Dorsolateral prefrontal cortex (tissue), 120 donors: ENCODE measurements at regions of chr6 and their contacts with region 1.

Region 1: DNA sequence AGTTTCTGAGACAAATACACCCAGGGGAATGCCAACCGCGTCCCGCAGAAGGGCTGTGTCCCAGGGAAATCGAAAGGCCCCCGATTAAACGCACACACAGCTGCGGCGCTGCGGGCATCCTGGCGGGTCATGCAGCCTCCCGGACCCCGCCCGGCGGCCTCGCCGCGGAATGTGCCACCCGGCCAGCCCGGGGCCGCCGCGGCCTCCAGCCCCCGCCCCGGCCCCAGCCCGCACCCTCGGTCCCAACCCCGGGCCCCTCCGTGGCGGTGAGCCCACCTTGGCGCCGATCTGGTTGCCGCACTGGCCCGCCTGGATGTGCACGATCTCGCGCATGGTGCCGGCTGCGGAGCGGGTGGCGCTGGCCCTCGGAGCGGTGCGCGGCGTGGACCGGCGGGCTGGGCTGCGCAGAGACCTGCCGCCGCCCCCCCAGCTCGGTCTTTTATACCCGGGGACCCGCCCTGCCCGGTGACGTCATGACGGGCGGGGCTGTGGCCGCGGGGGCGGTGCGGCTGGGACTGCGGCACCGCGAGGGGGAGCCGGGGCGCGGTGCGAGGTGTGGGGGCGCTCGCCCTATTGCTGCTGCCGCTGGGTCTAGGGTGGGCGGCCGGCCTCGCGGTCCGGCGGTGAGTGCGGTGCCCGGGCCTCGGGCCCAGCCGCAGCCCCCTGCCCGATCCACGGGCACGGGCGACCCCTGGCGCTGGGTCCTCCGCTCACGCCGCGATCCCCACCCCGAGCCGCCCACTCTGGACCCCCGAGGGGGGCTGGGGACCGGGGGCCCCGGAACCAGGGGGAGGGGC is at the start of gene TUBB2A:
- DNase-seq: peak; percentile 61 to 93 (median 83)
- H3K4me3 ChIP-seq: peak within 1 kb of the TSS; percentile 52 to 99 (median 84)
- H3K27ac ChIP-seq: peak within 1 kb of the TSS; percentile 52 to 99 (median 96)
- H3K27me3 ChIP-seq: no peaks in the 10 kb centered on the region
- CTCF ChIP-seq: peak in 54 of 56 donors; percentile 21 to 81 (median 60)
- total RNA-seq, gene TUBB2A: 207 to 859 (median 516) TPM

Region 2: DNA sequence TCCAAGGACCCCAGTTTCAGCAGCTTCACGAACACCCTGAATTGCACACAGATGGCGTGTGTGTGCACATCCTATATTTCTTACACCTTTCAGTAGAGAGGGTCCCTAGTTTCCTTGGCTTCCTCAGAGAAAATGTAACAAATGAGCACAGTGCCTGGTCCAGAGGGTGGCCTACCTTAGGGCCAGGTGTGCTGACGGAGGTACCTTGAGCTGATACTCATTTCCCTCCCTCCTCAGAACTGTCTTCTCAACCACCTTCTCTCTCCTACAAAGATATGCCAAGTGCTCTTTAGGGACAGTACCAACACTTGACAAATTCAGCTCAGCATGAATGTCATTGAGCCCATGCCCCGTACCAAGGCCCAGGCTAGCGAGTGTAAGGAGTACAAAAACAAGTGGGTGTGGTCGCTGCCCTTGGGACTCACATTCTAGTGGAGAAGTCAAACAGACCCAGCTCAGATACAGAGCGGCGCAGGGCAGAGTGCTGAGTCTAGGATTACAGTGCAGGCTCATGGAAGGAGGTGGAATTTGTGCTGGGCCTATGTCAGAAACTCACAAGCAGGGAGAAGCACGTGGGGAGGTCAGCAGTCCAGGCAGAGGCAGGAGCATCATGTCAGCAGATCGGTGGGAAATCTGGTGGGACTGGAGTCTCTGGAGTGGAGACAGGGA is 48.4 kb before region 1 on chr6:
- intact Hi-C with region 1: no loop called
- DNase-seq: no peak
- H3K4me3 ChIP-seq: no peak overlapping the region
- H3K27ac ChIP-seq: no peak overlapping the region
- H3K27me3 ChIP-seq: no peaks in the 10 kb centered on the region
- CTCF ChIP-seq: no peak

Region 3: DNA sequence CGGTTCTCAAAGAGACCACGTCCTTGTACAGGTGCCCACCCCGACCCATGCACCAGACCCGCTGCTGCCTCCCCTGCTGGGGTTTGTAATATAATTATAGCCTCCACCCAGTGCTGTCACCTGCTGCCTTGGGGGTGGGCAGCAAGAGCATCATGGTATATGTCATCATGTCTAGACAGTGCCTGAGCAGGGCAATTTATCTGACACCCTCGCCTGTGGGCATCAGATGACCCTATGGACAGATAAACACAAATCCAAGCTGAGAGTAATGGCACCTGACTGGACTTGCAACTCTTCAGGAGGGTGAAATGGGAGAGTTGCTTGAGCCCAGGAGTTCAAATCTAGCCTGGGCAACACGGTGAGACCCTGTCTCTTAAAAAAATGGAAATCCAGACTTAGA is 23.0 kb after region 1 on chr6:
- intact Hi-C with region 1: loop called in 1 of 2 experiments (anchors 1 kb)
- DNase-seq: no peak
- H3K4me3 ChIP-seq: no peak overlapping the region
- H3K27ac ChIP-seq: no peak overlapping the region
- H3K27me3 ChIP-seq: peaks cover 0 to 4% (median 0%) of the 10 kb centered on the region in 45 donors
- CTCF ChIP-seq: no peak

Region 4: GRCh38 chr6:3194535-3195419 is 37.4 kb after region 1 on chr6:
- intact Hi-C with region 1: loop called in 1 of 2 experiments (anchors 5 kb)
- DNase-seq: peak in 9 of 10 donors; percentile 63 to 86 (median 73)
- H3K4me3 ChIP-seq: peak overlapping the region in 52 of 59 donors; percentile 3 to 52 (median 30)
- H3K27ac ChIP-seq: peak overlapping the region; percentile 20 to 94 (median 85)
- H3K27me3 ChIP-seq: no peaks in the 10 kb centered on the region
- CTCF ChIP-seq: no peak

Region 5: GRCh38 chr6:3209114-3210023 is 52.0 kb after region 1 on chr6:
- intact Hi-C with region 1: loop called in 1 of 2 experiments (anchors 5 kb)
- DNase-seq: peak in 4 of 10 donors; percentile 54 to 58 (median 56)
- H3K4me3 ChIP-seq: peak overlapping the region in 1 of 59 donors; percentile 17
- H3K27ac ChIP-seq: peak overlapping the region in 3 of 59 donors; percentile 6 to 34 (median 16)
- H3K27me3 ChIP-seq: no peaks in the 10 kb centered on the region
- CTCF ChIP-seq: no peak

Region 6: GRCh38 chr6:3231247-3232016 is 74.1 kb after region 1 on chr6:
- intact Hi-C with region 1: loop called (anchors 5 kb)
- DNase-seq: peak; percentile 52 to 91 (median 83)
- H3K4me3 ChIP-seq: peak overlapping the region; percentile 53 to 94 (median 72)
- H3K27ac ChIP-seq: peak overlapping the region; percentile 71 to 99 (median 95)
- H3K27me3 ChIP-seq: peaks cover 0 to 75% (median 23%) of the 10 kb centered on the region in 45 donors
- CTCF ChIP-seq: peak in 5 of 56 donors; percentile 7 to 13 (median 9)

Region 7: GRCh38 chr6:3258720-3259490 is 101.6 kb after region 1 on chr6 and contains the start of gene PSMG4:
- intact Hi-C with region 1: loop called (anchors 2 to 5 kb)
- DNase-seq: peak; percentile 82 to 96 (median 90)
- H3K4me3 ChIP-seq: peak within 1 kb of the TSS; percentile 53 to 98 (median 89)
- H3K27ac ChIP-seq: peak within 1 kb of the TSS in 54 of 59 donors; percentile 2 to 92 (median 75)
- H3K27me3 ChIP-seq: no peaks in the 10 kb centered on the region
- CTCF ChIP-seq: peak in 25 of 56 donors; percentile 1 to 47 (median 25)
- total RNA-seq, gene PSMG4: 17.1 to 34.4 (median 25.3) TPM

Region 8: DNA sequence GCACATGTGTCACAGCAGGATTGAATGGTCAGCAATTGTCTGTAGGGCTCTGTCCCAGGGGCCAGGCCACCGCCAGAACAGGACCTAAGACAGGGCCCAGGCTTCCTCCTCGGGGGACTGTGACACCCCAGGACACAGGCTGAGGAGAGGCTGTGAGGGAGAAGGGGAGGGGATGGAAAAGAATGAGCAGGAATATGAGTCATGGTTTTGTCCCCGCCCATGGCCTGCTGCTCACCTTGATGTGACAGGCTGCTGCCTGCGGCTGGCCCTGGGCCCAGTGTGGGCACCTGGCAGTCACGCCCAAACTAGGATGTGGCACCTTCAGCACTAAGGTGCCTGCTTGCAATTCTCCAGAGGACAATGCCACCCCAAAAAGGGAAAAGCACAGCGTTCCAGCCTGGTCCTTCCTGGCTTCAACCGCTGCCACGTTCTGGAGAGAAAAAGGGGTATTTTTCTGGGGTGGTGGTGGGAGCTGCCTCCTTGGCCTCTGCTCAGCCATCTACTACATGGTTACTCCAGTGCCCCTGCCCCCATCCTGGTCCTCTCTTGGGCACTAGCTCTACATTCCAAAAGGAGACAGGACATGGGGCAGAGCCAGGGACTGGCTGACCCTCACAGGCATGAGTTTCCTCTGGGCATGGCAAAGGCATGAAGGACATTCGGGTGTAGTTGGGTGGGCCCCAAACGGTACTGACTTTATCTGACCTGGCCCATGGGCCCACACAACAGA is 206.1 kb after region 1 on chr6:
- intact Hi-C with region 1: no loop called
- DNase-seq: no peak
- H3K4me3 ChIP-seq: no peak overlapping the region
- H3K27ac ChIP-seq: peak overlapping the region in 30 of 59 donors; percentile 1 to 97 (median 48)
- H3K27me3 ChIP-seq: no peaks in the 10 kb centered on the region
- CTCF ChIP-seq: no peak